Caco-2 (cell line): ENCODE measurements at regions of chr11 and their contacts with region 1.

Region 1: DNA sequence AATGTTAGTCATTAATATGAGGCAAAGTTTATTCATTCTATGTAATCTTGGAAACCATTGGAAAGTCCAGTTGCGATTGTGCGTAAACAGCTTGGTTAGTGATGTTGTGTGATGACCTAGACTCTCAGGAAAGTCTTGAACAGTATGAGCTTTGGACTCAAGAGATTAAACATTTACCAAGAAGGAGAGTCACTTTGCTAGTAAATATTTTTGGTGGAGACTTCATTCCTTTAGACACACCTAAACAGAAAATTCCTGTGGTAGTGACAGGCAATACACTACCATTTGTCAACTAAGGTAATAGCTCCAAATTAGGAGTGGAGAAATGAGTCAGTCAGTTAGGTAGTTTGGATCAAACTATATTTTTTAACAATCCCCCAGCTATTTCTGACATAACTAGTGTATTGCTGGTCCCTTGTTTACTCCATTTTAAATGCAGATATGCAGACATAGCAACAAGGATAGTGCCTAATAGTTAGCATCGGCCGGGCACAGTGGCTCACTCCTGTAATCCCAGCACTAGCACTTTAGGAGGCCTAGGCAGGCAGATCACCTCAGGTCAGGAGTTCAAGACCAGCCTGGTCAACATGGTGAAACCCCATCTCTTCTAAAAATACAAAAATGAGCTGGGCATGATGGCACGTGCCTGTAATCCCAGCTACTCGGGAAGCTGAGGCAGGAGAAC is 89.3 kb downstream of the ARHGAP42 start:
- DNase-seq: peak; percentile 62 to 79
- H3K4me3 ChIP-seq: no peak overlapping the region
- H3K4me3 Mint-ChIP-seq: peak overlapping the region; percentile 39
- H3K27ac Mint-ChIP-seq: peak overlapping the region; percentile 97
- H3K4me1 ChIP-seq: peaks cover 49% of the 10 kb centered on the region
- H3K4me1 Mint-ChIP-seq: peaks cover 25% of the 10 kb centered on the region
- H3K27me3 ChIP-seq: no peaks in the 10 kb centered on the region
- H3K27me3 Mint-ChIP-seq: no peaks in the 10 kb centered on the region
- CTCF ChIP-seq: no peak

Region 2: GRCh38 chr11:100681064-100681502 is 95.3 kb before region 1 on chr11:
- CTCF ChIA-PET with region 1: no interaction called
- POLR2A ChIA-PET with region 1: no interaction called
- intact Hi-C with region 1: loop called (anchors 1 kb)
- DNase-seq: peak; percentile 81 to 86
- H3K4me3 ChIP-seq: no peak overlapping the region
- H3K4me3 Mint-ChIP-seq: peak overlapping the region; percentile 34
- H3K27ac Mint-ChIP-seq: peak overlapping the region; percentile 71
- H3K4me1 ChIP-seq: no peaks in the 10 kb centered on the region; the same call in 1 of the 2 replicates
- H3K4me1 Mint-ChIP-seq: peaks cover 13% of the 10 kb centered on the region
- H3K27me3 ChIP-seq: no peaks in the 10 kb centered on the region
- H3K27me3 Mint-ChIP-seq: no peaks in the 10 kb centered on the region
- CTCF ChIP-seq: no peak

Region 3: DNA sequence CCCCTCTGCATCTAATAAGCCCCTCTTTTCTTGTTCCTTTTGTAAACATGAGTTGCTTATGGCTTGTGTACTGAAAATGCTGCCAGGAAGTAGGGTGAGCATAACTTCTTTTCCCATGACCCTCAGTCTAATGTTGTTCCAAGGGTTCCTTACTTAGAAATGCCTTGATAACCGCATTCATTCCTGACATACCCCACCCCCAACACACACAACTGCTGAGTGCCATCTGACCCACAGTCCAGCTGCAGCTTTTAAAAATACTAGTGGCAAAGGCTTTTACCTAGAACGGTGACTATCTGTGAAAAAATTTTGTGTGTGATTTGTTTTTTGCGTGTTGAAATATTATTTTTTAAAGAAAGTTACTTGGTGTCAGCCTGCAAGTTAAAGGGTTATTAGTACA is 36.7 kb before region 1 on chr11:
- CTCF ChIA-PET with region 1: interaction called, 3 read pairs
- POLR2A ChIA-PET with region 1: no interaction called
- intact Hi-C with region 1: loop called (anchors 2 kb)
- DNase-seq: peak; percentile 46 to 74
- H3K4me3 ChIP-seq: no peak overlapping the region
- H3K4me3 Mint-ChIP-seq: no peak overlapping the region
- H3K27ac Mint-ChIP-seq: peak overlapping the region; percentile 40
- H3K4me1 ChIP-seq: peaks cover 22% of the 10 kb centered on the region
- H3K4me1 Mint-ChIP-seq: peaks cover 40% of the 10 kb centered on the region
- H3K27me3 ChIP-seq: no peaks in the 10 kb centered on the region
- H3K27me3 Mint-ChIP-seq: no peaks in the 10 kb centered on the region
- CTCF ChIP-seq: no peak

Region 4: GRCh38 chr11:100808904-100809491 is 32.6 kb after region 1 on chr11:
- CTCF ChIA-PET with region 1: no interaction called
- POLR2A ChIA-PET with region 1: no interaction called
- intact Hi-C with region 1: loop called (anchors 1 kb)
- DNase-seq: peak; percentile 32 to 53
- H3K4me3 ChIP-seq: no peak overlapping the region
- H3K4me3 Mint-ChIP-seq: no peak overlapping the region
- H3K27ac Mint-ChIP-seq: peak overlapping the region; percentile 45
- H3K4me1 ChIP-seq: peaks cover 35% of the 10 kb centered on the region
- H3K4me1 Mint-ChIP-seq: peaks cover 21% of the 10 kb centered on the region
- H3K27me3 ChIP-seq: no peaks in the 10 kb centered on the region
- H3K27me3 Mint-ChIP-seq: no peaks in the 10 kb centered on the region
- CTCF ChIP-seq: no peak

Region 5: GRCh38 chr11:100849009-100849900 is 72.9 kb after region 1 on chr11:
- CTCF ChIA-PET with region 1: no interaction called
- POLR2A ChIA-PET with region 1: interaction called, 4 read pairs
- intact Hi-C with region 1: loop called (anchors 1 kb)
- DNase-seq: peak in 1 of 2 experiments; percentile 54
- H3K4me3 ChIP-seq: no peak overlapping the region
- H3K4me3 Mint-ChIP-seq: peak overlapping the region; percentile 27
- H3K27ac Mint-ChIP-seq: peak overlapping the region; percentile 30
- H3K4me1 ChIP-seq: peaks cover 46% of the 10 kb centered on the region
- H3K4me1 Mint-ChIP-seq: peaks cover 50% of the 10 kb centered on the region
- H3K27me3 ChIP-seq: no peaks in the 10 kb centered on the region
- H3K27me3 Mint-ChIP-seq: no peaks in the 10 kb centered on the region
- CTCF ChIP-seq: no peak

Region 6: GRCh38 chr11:101860696-101861427 is 1084.5 kb after region 1 on chr11:
- CTCF ChIA-PET with region 1: no interaction called
- POLR2A ChIA-PET with region 1: no interaction called
- intact Hi-C with region 1: loop called (anchors 10 kb)
- DNase-seq: peak; percentile 73 to 79
- H3K4me3 ChIP-seq: no peak overlapping the region
- H3K4me3 Mint-ChIP-seq: no peak overlapping the region
- H3K27ac Mint-ChIP-seq: peak overlapping the region; percentile 71
- H3K4me1 ChIP-seq: peaks cover 28% of the 10 kb centered on the region
- H3K4me1 Mint-ChIP-seq: peaks cover 25% of the 10 kb centered on the region
- H3K27me3 ChIP-seq: no peaks in the 10 kb centered on the region
- H3K27me3 Mint-ChIP-seq: no peaks in the 10 kb centered on the region
- CTCF ChIP-seq: peak; percentile 89 to 95